HepG2 (cell line): ENCODE measurements at regions of chr4 and their contacts with region 1.

Region 1: DNA sequence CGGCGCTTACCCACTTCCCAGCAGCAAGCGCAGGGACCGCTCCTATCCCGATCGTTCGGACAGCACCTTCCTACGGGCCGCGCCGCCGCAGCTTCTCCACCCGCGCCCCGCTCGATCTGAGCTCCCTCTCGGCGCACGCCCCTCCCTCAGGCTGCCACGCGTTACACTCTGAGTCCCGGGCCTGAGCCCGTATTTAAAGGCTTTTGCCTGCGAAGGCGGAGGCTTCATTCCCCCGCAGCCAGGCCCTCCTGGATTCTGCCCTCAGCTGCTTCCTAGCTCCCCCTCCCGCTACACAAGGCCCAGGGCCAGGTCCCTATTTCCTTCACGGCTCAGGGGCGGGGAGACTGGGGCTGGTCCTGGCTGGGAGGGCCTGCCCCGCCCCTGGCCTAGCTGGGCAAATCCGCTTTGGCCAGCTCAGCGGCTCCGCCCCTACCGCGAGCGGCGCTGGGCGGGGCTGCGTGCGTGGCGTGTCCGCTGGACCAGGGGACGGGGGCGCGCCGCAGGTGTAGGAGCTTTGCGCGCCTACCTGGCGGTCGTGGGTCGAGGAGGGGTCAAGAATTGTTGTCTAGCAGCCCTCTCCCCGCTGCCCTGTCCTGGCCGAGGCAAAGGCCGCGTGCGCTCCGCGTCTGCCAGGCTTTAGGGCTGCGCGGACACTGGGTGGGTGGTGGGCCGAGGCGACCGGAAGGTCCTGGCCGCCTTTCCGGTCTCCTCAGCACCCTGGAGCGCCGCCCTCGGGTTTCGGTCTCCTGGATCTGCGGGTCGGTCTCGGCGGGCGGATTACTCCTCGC is at the start of gene UGDH:
- DNase-seq: peak; percentile 98
- ATAC-seq: peak; percentile 89
- H3K4me3 ChIP-seq: peak within 1 kb of the TSS; percentile 95 to 96 (median 96)
- H3K27ac ChIP-seq: peak within 1 kb of the TSS; percentile 94
- H3K4me1 ChIP-seq: peaks cover 24% of the 10 kb centered on the region
- H3K27me3 ChIP-seq: peaks cover 0 to 4% of the 10 kb centered on the region in 2 experiments; a peak in 1 of 5 replicates
- CTCF ChIP-seq: peak; percentile 49
- EP300 ChIP-seq: peak; percentile 11 to 55; a peak in 2 of 4 replicates
- POLR2A ChIP-seq: peak; percentile 100
- RAD21 ChIP-seq: peak; percentile 76
- total RNA-seq, gene UGDH: 384 and 661 TPM in 2 replicates

Region 2: GRCh38 chr4:39383690-39384089 is 143.8 kb before region 1 on chr4:
- CTCF ChIA-PET with region 1: no interaction called
- POLR2A ChIA-PET with region 1: no interaction called
- in situ Hi-C with region 1: no loop called
- intact Hi-C with region 1: no loop called
- DNase-seq: peak; percentile 12
- ATAC-seq: peak; percentile 81
- H3K4me3 ChIP-seq: no peak overlapping the region
- H3K27ac ChIP-seq: no peak overlapping the region
- H3K4me1 ChIP-seq: no peaks in the 10 kb centered on the region
- H3K27me3 ChIP-seq: no peaks in the 10 kb centered on the region
- CTCF ChIP-seq: peak; percentile 53
- EP300 ChIP-seq: no peak
- POLR2A ChIP-seq: no peak
- RAD21 ChIP-seq: no peak

Region 3: GRCh38 chr4:39458505-39459300 is 68.8 kb before region 1 on chr4 and contains the starts of genes LIAS and RPL9:
- CTCF ChIA-PET with region 1: no interaction called
- POLR2A ChIA-PET with region 1: interaction called, 10 read pairs
- in situ Hi-C with region 1: no loop called
- intact Hi-C with region 1: no loop called
- DNase-seq: peak; percentile 96
- ATAC-seq: peak; percentile 95
- H3K4me3 ChIP-seq: peak within 1 kb of the TSS; percentile 84 to 97 (median 93)
- H3K27ac ChIP-seq: peak within 1 kb of the TSS; percentile 87
- H3K4me1 ChIP-seq: peaks cover 51% of the 10 kb centered on the region
- H3K27me3 ChIP-seq: no peaks in the 10 kb centered on the region; a peak in 1 of 5 replicates
- CTCF ChIP-seq: no peak
- EP300 ChIP-seq: peak in 1 of 2 experiments; percentile 25; a peak in 1 of 4 replicates
- POLR2A ChIP-seq: peak; percentile 97 to 99
- RAD21 ChIP-seq: no peak; the same call in 1 of the 2 replicates
- total RNA-seq, gene LIAS: 16.6 and 18.3 TPM in 2 replicates
- total RNA-seq, gene RPL9: 2,148 and 2,808 TPM in 2 replicates

Region 4: DNA sequence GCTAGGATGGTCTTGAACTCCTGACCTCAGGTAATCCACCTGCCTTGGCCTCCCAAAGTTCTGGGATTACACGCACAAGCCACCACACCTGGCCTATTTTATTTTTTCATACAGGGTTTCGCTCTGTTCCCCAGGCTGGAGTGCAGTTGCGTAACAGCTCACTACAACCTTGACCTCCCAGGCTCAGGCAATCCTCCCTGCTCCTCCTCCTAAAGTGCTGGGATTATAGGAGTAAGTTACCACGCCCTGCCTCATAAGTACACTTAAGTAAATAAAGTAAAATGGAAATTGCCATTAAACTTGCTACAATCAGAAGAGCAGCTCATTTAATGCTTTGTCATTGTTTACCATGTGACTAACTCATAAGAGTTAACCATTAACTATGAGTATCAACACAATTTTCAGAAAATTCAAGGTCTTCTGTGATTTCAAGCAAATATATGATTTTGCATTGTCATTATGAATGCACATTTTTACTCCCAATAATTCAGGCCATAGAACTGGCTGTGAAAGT is 12.5 kb before region 1 on chr4:
- CTCF ChIA-PET with region 1: no interaction called
- POLR2A ChIA-PET with region 1: interaction called, 75 read pairs
- in situ Hi-C with region 1: no loop called
- intact Hi-C with region 1: loop called (anchors 1 kb)
- DNase-seq: peak; percentile 99
- ATAC-seq: peak; percentile 77
- H3K4me3 ChIP-seq: no peak overlapping the region
- H3K27ac ChIP-seq: peak overlapping the region; percentile 97
- H3K4me1 ChIP-seq: peaks cover 67% of the 10 kb centered on the region
- H3K27me3 ChIP-seq: no peaks in the 10 kb centered on the region
- CTCF ChIP-seq: no peak
- EP300 ChIP-seq: peak in 1 of 2 experiments; percentile 94; a peak in 2 of 4 replicates
- POLR2A ChIP-seq: peak in 1 of 2 experiments; percentile 33; a peak in 1 of 4 replicates
- RAD21 ChIP-seq: peak; percentile 48; the same call in 1 of the 2 replicates

Region 5: DNA sequence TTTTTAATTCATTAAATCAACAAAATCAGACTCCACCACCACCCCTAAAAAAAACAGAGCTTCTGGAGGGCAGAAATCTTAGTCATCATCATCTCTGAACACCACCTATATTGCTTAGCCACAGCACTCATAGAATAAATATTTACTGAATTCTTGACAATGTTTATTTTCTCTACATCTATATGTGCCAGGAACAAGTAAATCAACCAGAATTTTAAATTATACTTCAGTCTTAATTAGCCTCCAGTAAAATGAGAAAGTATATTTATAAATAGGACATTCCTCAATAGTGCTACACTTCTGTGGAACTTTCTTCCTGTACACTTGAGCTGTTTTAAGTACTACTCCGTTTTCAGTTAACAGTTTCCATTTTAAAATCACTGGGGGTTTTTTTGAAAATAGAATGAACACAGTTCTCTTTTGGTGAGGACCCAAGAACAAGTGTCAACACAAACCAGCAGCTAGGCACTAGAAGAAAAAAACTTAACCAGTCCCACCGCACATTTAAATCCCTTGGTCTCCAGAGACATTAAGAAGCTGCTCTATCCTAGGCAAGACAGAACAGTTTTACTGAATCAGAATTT is 85.7 kb after region 1 on chr4:
- CTCF ChIA-PET with region 1: no interaction called
- POLR2A ChIA-PET with region 1: interaction called, 11 read pairs
- in situ Hi-C with region 1: no loop called
- intact Hi-C with region 1: no loop called
- DNase-seq: peak; percentile 49
- ATAC-seq: peak; percentile 63
- H3K4me3 ChIP-seq: no peak overlapping the region
- H3K27ac ChIP-seq: peak overlapping the region; percentile 49
- H3K4me1 ChIP-seq: peaks cover 80% of the 10 kb centered on the region
- H3K27me3 ChIP-seq: no peaks in the 10 kb centered on the region
- CTCF ChIP-seq: no peak
- EP300 ChIP-seq: no peak
- POLR2A ChIP-seq: no peak
- RAD21 ChIP-seq: no peak

Region 6: DNA sequence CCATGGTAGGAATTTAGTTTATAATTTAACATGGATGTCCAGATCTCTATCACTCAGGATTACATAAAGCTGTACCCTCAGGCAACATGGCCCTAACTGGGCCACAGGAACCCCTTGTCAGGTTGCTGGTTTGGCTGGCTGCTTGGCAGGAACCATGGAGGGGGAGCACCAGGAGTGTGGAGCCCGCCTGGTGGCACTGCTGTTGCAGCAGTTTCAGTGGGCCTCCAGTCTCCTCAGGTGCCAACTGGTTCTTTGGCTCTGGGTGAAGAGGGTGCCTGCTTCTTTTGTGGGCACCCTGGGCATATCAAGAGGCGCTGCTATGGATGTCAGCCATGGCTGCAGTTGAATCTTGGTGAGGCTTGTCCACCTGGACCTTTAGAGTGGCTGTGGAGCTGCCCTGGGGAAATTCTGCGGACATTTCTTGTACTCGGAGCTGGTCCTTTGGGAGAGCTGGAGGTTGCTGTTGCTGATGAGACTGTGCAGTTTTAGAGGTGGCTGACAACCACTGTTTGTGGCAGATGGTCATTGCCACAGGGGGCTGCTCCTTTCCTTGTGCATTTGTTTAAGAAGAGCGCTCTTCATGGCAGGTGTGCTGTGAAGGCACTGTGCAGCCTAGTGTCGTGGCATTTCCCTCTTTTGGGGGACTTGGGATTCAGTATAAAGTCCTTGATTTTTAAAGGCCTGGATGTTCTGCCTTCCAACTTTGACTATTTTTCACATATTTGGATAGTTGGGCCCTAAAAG is 121.5 kb after region 1 on chr4:
- CTCF ChIA-PET with region 1: no interaction called
- POLR2A ChIA-PET with region 1: interaction called, 17 read pairs
- in situ Hi-C with region 1: no loop called
- intact Hi-C with region 1: no loop called
- DNase-seq: no peak
- ATAC-seq: peak; percentile 57
- H3K4me3 ChIP-seq: no peak overlapping the region
- H3K27ac ChIP-seq: peak overlapping the region; percentile 83
- H3K4me1 ChIP-seq: peaks cover 44% of the 10 kb centered on the region
- H3K27me3 ChIP-seq: no peaks in the 10 kb centered on the region
- CTCF ChIP-seq: no peak
- EP300 ChIP-seq: no peak
- POLR2A ChIP-seq: no peak
- RAD21 ChIP-seq: no peak

Region 7: DNA sequence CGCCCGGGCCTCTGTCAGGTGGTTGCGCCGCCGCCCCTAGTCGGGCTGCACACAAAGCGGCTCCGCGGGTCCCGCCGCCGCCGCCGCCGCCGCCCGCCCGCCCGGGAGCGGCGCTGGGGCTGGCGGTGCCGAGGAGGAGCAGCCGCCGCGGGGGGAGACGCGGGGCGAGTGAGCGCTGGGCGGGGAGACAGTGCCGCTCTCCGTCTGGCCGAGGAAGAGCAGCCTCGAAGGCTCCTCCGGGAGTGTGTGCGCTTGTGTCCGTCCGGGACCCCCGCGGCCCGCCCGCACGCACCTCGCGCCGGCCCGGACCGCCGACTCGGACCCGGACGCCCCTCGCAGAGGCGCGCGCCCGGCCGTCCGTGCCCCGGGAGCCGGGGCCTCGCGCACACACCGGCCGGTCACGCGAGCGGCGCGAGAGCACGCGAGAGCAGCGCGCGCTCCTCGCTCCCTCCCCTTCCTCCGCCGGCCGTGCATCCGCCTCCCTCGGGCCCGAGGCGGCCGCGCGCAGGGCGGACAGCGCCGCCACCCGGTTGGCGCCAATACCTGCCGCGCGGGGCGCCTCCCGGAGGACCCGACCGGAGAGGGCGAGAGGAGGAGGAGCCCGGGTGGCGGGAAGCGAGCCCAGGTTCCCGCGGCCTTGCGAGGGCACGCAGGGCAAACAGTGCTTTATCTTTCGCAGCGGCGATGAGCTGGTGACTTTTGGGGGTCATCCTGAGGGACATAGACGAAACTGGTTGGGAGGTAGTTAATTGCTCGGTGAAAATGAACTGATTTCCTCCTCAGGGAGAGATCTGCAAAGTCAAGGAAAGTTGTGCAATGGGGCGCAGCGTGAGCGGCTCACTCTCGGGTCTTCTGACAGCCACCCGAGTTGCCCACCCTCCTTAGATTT is 450.3 kb after region 1 on chr4 and contains the start of gene PDS5A:
- CTCF ChIA-PET with region 1: no interaction called
- POLR2A ChIA-PET with region 1: interaction called, 6 read pairs
- in situ Hi-C with region 1: no loop called
- intact Hi-C with region 1: loop called (anchors 2 kb)
- DNase-seq: peak; percentile 81
- ATAC-seq: peak; percentile 86
- H3K4me3 ChIP-seq: peak within 1 kb of the TSS; percentile 98 to 99 (median 99)
- H3K27ac ChIP-seq: peak within 1 kb of the TSS; percentile 90
- H3K4me1 ChIP-seq: peaks cover 43% of the 10 kb centered on the region
- H3K27me3 ChIP-seq: no peaks in the 10 kb centered on the region; a peak in 1 of 5 replicates
- CTCF ChIP-seq: peak; percentile 83
- EP300 ChIP-seq: 0 out of 4 replicates have a peak, but pooled peaks of 1 of the 2 experiments have one; percentile 36
- POLR2A ChIP-seq: peak; percentile 39 to 70
- RAD21 ChIP-seq: peak; percentile 95
- total RNA-seq, gene PDS5A: 57.0 and 77.4 TPM in 2 replicates